GM10248 (cell line): ENCODE measurements at regions of chr2 and their contacts with region 1.

Region 1: DNA sequence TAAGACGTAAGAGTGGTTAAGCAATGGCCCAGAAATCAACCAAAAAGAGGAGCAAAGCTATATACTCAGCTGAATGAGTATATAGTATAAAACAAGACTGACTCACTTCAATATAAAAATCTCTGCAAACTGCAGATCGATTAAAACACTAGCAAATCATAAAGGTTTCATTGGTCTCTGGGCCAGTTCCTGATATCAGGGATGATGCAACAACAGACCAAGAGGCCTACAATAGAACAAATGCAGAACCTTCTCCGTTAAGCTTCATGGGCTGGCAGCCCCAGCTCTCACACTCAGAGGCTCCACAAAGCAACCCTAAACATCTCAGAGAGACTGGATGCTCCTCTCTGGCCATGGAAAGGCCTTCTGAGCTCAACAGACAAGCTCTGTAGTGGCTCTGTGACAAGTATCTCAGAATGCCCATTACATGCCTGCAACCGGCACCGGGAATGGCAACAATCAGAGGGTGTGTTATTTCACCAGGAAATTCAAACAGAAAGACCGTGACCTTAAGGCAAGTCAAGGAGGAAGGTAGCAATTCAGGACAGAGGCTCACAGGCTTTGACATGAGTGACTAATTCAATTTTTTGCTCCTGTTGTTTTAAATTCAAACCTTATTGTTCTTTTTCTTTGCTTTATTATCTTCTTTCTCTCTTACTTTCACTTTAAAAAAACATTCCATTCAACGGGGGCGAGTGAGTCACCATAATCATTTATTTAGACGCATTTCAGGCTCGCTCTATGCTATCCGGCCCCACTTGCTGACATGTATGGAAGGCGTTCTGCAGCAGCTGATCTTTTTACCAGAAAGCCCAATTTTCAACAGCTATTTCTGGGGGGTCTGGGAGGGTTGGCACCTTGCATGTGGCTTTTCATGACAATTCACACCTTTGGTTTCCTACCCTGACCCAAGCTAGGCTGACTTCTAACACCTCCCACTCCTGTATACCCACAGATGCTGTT is 15.1 kb downstream of the CYRIA start:
- DNase-seq: no peak
- CTCF ChIP-seq: no peak

Region 2: GRCh38 chr2:16665748-16666448 is 15.3 kb after region 1 on chr2 and contains the start of gene CYRIA:
- CTCF ChIA-PET with region 1: interaction called, 42 read pairs
- POLR2A ChIA-PET with region 1: no interaction called
- DNase-seq: peak; percentile 83
- CTCF ChIP-seq: no peak

Region 3: DNA sequence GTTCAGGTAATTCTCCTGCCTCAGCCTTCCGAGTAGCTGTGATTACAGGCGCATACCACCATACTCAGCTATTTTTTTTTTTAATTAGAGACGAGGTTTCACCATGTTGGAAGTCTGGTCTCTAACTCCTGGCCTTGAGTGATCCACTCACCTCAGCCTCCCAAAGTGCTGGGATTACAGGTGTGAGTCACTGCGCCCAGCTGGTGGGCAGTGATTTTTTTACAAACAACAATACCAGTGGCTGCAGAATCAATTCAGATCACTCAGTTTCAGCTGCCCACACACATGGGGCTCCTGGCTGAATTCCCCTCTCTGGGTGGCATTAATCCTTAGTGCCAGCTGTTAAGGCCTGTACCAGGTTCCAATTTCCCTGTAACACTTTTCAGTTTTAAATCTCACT is 28.4 kb after region 1 on chr2:
- CTCF ChIA-PET with region 1: interaction called, 14 read pairs
- POLR2A ChIA-PET with region 1: no interaction called
- DNase-seq: no peak
- CTCF ChIP-seq: no peak

Region 4: DNA sequence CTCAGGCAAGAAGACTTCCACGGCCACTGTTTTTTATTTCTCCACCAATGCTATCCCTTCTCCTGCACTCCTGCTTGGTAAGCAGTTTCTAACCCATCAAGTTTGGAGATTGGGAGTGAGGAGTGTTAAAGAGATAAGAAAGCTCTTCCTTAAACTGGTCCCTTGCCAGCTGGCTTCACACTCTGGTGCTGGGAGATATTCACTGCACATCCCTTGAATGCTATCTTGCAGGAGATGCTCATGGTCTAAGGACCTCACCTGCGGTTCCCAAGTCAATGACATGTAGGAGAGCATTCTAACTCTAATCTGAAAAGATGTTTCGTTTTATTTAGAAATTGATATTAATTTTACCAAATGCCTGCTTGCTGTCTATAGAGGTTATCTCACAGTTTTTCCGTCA is 43.3 kb after region 1 on chr2:
- CTCF ChIA-PET with region 1: no interaction called
- POLR2A ChIA-PET with region 1: no interaction called
- DNase-seq: no peak
- CTCF ChIP-seq: no peak